Gastrocnemius medialis (tissue), 4 donors: ENCODE measurements at regions of chr3 and their contacts with region 1.

Region 1: GRCh38 chr3:58441514-58442450 is 8.2 kb upstream of the PDHB start:
- DNase-seq: no peak
- ATAC-seq: no peak
- H3K4me3 ChIP-seq: no peak overlapping the region
- H3K27ac ChIP-seq: no peak overlapping the region
- H3K4me1 ChIP-seq: no peaks in the 10 kb centered on the region
- H3K27me3 ChIP-seq: no peaks in the 10 kb centered on the region
- CTCF ChIP-seq: no peak
- POLR2A ChIP-seq: no peak

Region 2: DNA sequence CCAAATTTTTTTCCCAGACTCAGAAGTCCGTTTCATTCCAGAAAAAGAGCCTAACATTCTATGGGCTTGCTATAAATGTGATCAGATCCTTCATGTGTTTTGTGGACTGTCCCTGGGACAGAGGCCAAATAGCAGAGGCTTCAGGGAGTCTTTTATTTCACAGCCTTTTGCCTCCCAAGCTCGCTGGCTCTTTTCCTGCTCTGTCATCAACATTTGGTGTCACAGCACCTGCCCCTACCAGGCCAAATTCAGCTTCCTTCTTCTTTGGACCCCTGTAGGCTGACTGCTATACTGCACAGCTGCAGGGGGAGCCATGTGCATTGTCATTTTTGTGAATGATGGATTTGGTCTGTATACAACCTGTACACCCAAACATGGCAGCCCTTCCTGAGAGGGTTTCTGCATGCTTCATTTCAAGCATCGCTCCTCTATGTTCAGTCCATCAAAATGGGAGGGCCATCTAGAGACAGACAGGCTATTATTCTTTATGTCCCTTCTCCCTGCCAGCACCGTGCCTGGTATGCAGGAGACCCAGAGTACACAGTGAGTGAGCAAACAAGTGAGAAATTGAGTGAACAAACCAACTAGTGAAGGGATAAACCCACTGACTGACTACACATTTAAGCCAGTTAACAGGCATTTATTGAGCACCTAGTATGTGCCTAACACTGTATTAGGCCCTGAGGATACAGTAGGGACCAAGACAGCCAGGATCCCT is 153.6 kb before region 1 on chr3:
- in situ Hi-C with region 1: no loop called
- intact Hi-C with region 1: no loop called
- DNase-seq: peak; percentile 24 to 36
- ATAC-seq: peak; percentile 65 to 82
- H3K4me3 ChIP-seq: no peak overlapping the region
- H3K27ac ChIP-seq: peak overlapping the region in 2 of 4 donors; percentile 22 to 50
- H3K4me1 ChIP-seq: peaks cover 0 to 9% of the 10 kb centered on the region in 2 donors
- H3K27me3 ChIP-seq: no peaks in the 10 kb centered on the region
- CTCF ChIP-seq: no peak
- POLR2A ChIP-seq: no peak

Region 3: DNA sequence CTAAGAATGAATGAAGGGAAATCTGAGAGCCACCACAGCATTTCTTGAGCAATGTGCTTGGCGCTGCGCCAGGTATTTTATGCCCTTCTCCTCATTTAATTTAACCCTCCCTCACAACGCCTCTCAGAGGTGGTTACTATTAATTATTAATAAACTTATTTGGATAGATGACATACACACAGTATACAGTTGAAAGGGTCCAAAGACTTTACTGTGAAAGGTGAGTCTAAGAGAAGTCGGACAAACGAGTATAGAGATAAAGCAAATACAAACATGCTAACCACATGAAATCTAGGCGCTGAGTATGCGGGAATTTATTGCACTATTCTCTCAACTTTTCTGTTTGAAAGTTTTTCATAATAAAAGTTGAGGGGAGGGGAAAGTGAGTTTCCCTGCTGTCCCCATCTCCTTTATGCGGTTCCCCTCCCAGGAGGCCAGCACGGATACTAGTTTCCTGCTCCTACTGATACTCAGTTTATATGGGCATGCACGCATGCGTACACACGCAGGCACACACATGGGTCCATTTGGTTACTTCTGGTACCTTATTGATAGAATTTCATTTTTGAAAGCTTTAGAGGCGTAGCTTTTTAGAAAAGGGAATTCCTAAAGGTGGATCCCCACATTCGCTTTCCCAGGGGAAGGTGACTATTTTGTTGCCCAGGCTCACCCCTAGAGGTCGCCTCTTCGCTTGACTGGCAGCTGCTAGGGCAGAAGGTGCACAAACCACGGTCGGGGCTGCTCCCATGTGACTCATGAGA is 21.6 kb after region 1 on chr3:
- in situ Hi-C with region 1: no loop called
- intact Hi-C with region 1: loop called (anchors 1 kb)
- DNase-seq: peak; percentile 54 to 71
- ATAC-seq: peak; percentile 88 to 93
- H3K4me3 ChIP-seq: peak overlapping the region; percentile 12 to 50 (median 42)
- H3K27ac ChIP-seq: peak overlapping the region; percentile 22 to 61 (median 52)
- H3K4me1 ChIP-seq: peaks cover 17 to 18% of the 10 kb centered on the region in 2 donors
- H3K27me3 ChIP-seq: no peaks in the 10 kb centered on the region
- CTCF ChIP-seq: peak; percentile 65 to 83 (median 74)
- POLR2A ChIP-seq: no peak